Activated naive CD4-positive, alpha-beta T cell treated with anti-CD3 and anti-CD28 coated beads for 36 hours (primary cell): ENCODE measurements at regions of chr3 and their contacts with region 1.

Region 1: DNA sequence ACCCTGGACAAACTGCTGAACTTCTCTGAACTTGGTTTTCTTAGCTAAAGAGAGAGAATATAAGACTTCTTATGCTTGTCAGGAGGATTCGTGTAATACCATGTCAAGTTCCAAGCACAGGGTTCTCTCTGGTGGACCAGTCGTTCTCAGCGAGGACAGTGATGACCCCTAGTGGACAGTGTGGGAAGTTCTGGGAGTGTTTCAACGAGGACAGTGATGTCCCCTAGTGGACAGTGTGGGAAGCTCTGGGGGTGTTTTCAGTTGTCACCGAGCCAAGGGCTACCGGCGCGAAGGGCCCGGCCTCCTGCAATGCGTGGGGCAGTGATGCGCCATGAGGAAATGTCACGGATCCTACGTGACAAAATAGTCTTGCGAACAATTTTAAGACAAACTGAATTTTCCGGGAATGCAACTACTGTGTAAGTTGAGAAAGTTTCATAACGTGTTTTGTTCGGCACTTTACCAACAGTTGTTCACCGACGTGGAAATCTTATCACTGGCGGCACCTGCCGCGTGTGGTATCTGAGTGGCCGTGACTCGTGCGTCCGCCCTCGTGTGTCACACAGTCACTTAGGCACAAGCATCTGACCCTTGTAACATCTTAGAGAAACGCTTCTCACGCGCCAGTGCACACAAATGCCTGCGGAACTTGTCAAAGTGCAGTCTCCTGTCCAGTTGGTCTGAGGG is 39.3 kb upstream of the MUC4 start:
- DNase-seq: peak; percentile 96
- H3K4me3 Mint-ChIP-seq: peak overlapping the region; percentile 18
- H3K27ac Mint-ChIP-seq: no peak overlapping the region
- H3K4me1 Mint-ChIP-seq: peaks cover 2% of the 10 kb centered on the region
- H3K27me3 Mint-ChIP-seq: no peaks in the 10 kb centered on the region

Region 2: GRCh38 chr3:195508185-195508584 is 342.8 kb before region 1 on chr3:
- CTCF ChIA-PET with region 1: no interaction called
- intact Hi-C with region 1: loop called (anchors 5 kb)
- DNase-seq: no peak
- H3K4me3 Mint-ChIP-seq: no peak overlapping the region
- H3K27ac Mint-ChIP-seq: peak overlapping the region; percentile 51
- H3K4me1 Mint-ChIP-seq: peaks cover 24% of the 10 kb centered on the region
- H3K27me3 Mint-ChIP-seq: no peaks in the 10 kb centered on the region

Region 3: DNA sequence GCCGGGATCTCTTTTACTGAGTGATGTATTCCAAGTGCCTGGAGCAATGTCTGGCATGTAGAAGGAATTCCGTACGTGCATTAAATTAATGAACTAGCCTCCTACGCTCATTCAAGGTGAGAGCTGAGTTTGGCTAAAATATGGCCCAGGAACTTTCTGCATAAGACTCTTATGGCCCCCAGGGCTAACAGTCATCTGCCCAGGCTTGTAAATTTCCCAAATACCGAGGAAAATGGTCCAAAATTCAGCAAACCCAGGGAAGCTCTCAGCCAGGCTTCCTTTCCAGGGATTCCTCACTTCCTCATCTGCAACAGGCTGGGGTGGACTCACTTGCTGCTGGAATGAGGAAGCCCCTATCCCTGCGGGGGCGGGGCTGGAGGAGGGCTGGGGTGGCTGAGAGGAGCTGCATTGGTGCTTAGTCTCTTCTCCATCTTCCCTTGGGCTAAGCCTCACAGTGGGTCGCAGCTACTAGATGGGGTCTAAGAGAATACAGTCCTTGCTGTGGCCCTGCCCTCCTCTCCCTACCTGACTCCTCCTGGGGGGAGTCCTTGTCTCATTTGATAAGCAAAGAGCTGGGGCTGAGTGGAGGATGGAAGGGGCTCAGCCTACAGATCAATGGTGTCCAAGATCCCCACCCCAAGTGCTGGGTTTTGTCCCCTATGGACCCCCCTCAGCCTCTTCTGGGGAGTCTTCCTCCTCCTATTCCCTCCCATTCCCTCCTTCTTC is 238.8 kb before region 1 on chr3:
- CTCF ChIA-PET with region 1: interaction called, 11 read pairs
- intact Hi-C with region 1: no loop called
- DNase-seq: no peak
- H3K4me3 Mint-ChIP-seq: no peak overlapping the region
- H3K27ac Mint-ChIP-seq: peak overlapping the region; percentile 54
- H3K4me1 Mint-ChIP-seq: peaks cover 39% of the 10 kb centered on the region
- H3K27me3 Mint-ChIP-seq: no peaks in the 10 kb centered on the region

Region 4: GRCh38 chr3:195755791-195756676 is 95.0 kb before region 1 on chr3:
- CTCF ChIA-PET with region 1: interaction called, 10 read pairs
- intact Hi-C with region 1: no loop called
- DNase-seq: peak; percentile 42
- H3K4me3 Mint-ChIP-seq: no peak overlapping the region
- H3K27ac Mint-ChIP-seq: no peak overlapping the region
- H3K4me1 Mint-ChIP-seq: peaks cover 5% of the 10 kb centered on the region
- H3K27me3 Mint-ChIP-seq: peaks cover 24% of the 10 kb centered on the region

Region 5: DNA sequence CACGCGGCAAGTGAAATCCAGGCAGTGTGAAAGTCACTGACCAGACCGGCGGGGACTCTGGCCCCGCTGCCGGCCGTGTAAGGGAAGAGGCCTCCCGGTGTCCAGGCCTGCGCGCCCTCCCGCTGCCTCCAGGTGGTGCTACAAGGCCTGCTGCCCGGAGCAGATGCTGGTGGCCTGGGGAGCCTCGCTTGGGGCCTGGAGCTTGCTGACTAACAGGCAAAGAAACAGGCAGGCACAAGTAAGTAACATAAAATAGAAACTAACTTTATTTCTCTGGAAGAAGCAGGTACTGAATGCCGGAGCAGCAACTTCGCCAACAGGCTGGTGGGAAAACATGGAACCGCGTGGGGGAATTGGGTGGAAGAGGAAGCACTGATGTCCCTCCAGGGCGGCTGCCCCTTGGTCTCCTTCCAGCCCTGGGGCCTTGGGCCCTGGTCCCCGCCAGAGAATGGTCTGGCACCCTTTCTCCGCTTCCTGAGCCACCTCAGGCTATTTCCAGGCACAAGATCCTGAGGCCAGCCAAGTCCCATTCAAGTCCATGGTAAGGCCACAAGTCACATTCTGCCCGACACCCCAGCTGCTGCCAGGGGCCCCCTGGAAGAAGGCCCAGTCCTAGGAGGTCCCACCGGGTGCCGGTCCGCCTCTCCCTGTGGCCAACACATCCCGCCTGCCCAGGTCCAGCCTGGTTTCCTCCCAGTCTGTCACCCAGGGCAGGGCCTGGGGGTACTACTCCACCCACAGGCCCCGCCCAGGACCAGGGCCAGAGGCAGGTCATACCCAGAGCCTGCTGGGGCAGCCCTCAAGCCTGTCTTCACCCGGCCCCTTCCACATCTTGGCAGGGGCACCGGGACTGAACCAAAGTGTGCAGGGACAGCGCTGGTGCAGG is 12.4 kb after region 1 on chr3:
- CTCF ChIA-PET with region 1: interaction called, 15 read pairs
- intact Hi-C with region 1: no loop called
- DNase-seq: peak; percentile 79
- H3K4me3 Mint-ChIP-seq: no peak overlapping the region
- H3K27ac Mint-ChIP-seq: peak overlapping the region; percentile 36
- H3K4me1 Mint-ChIP-seq: peaks cover 8% of the 10 kb centered on the region
- H3K27me3 Mint-ChIP-seq: no peaks in the 10 kb centered on the region